Testis (tissue), 5 donors: ENCODE measurements at regions of chr3 and their contacts with region 1.

Region 1: GRCh38 chr3:64548200-64548889 is 139.5 kb downstream of the ADAMTS9 start:
- DNase-seq: peak; percentile 78
- H3K4me3 ChIP-seq: no peak overlapping the region
- H3K27ac ChIP-seq: no peak overlapping the region
- H3K4me1 ChIP-seq: no peaks in the 10 kb centered on the region
- H3K27me3 ChIP-seq: no peaks in the 10 kb centered on the region
- CTCF ChIP-seq: no peak
- POLR2A ChIP-seq: no peak

Region 2: DNA sequence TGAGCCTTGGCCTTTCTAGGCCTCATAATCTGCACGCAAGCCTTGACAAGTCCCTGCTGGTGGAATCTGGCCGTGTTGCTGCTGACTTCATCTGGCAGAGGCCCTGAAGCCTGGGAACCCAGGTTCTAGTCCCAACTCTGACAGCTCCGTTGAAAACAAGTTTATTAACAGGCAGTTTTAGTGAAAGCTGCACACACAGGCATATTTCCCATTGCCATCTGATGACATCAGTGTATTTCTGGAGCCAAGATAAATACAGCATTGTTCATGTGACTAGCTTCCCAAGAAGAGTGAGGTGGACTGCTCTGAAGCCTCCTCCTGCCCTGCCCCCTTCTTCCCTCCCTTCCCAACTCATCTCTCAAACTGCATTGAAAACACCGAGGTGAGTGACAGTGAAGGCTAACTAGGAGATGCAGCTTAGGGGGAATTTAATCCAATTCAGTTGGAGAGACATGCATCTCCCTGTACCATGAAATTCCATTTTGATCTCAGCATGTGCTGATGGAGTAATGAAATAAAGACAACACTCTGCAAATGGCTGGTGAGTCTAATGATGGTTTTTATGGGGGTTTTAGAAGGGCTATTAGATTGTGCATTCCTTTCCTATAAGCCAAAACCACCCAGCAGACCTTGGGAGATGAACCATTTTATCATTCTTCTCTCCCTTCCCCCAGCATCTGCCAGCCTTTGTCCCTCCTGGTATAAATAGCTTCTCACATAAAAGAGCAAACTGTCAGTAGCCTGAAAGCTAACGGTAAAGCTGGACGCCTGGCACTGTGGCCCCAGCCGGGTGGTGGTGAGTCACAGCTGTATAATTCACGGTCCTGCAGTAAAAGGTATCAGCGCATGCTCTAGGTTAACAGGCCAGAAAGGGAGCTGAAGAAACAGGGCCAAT is 361.0 kb before region 1 on chr3:
- intact Hi-C with region 1: no loop called
- DNase-seq: peak; percentile 54
- H3K4me3 ChIP-seq: no peak overlapping the region
- H3K27ac ChIP-seq: no peak overlapping the region
- H3K4me1 ChIP-seq: peaks cover 8% of the 10 kb centered on the region
- H3K27me3 ChIP-seq: no peaks in the 10 kb centered on the region
- CTCF ChIP-seq: no peak
- POLR2A ChIP-seq: no peak

Region 3: DNA sequence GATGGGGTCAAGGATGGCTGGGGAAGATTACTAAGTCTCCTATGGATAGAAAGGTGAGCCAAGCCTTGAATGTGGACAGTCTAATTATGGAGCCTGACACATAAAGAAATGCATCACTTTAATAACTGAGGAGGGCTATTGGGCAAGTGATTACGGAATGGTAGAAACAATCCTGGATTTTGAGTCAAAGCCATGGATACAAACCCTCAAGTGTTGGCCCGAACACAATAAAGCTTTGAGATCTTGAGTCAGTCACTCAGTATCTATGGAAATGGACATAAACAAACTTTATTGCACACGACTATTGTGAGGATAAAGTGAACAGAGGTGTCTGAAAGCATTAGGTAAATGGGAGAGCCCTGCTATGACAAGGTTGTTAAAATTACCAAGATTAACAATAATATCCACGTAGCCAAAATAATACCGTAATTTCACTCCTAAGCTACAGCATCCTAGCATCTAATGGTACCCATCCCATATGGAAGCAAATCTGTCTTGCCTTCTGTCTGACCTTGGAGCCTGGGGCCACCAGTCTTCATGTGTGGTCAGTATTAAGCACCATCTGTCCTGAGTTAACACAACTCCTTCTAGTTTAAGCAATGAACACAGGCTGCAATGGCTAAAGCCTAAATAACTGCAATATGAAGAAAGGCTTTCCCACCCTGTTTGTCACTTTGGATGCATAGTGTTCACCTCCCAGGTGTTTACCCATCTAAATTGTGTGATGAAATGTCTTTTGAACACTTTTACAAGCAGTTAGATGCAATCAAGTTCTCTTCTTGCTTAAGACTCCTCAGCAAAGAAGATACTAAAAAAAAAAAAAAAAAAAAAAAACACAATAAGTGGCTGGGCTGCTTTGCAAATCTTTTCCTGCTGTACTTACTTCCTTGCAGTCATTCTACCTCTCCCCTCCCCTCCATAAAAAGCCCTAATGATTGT is 186.1 kb before region 1 on chr3:
- intact Hi-C with region 1: no loop called
- DNase-seq: no peak
- H3K4me3 ChIP-seq: no peak overlapping the region
- H3K27ac ChIP-seq: no peak overlapping the region
- H3K4me1 ChIP-seq: no peaks in the 10 kb centered on the region
- H3K27me3 ChIP-seq: no peaks in the 10 kb centered on the region
- CTCF ChIP-seq: no peak
- POLR2A ChIP-seq: no peak

Region 4: DNA sequence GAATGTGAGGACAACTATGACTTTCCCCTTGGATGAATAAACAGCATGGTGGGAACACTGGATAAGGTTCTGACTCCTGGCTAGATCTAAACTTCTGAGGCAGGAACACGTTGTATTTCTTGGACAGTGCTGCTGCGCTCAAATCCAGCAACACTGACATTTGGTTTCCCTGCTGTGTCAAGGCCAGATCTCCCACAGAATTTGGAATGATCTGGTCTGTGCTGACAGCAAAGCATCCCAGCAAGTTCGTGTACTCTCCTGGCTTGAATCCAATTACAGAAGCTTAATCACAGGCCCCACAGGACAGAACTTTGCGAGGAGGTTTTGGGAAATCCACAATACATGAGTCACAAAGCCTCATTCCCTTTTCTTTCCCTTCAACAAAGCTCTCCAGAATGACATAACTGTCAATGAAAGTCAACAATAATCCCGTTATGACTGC is 46.9 kb after region 1 on chr3:
- intact Hi-C with region 1: loop called (anchors 10 kb)
- DNase-seq: peak; percentile 78
- H3K4me3 ChIP-seq: no peak overlapping the region
- H3K27ac ChIP-seq: peak overlapping the region in 1 of 2 donors; percentile 26
- H3K4me1 ChIP-seq: peaks cover 8% of the 10 kb centered on the region
- H3K27me3 ChIP-seq: no peaks in the 10 kb centered on the region
- CTCF ChIP-seq: no peak
- POLR2A ChIP-seq: no peak